Activated naive CD4-positive, alpha-beta T cell treated with anti-CD3 and anti-CD28 coated beads for 36 hours (primary cell): ENCODE measurements at regions of chr3 and their contacts with region 1.

Region 1: GRCh38 chr3:71652781-71653413 is 69.4 kb upstream of the FOXP1 start:
- DNase-seq: peak; percentile 42
- H3K4me3 Mint-ChIP-seq: no peak overlapping the region
- H3K27ac Mint-ChIP-seq: no peak overlapping the region
- H3K4me1 Mint-ChIP-seq: peaks cover 4% of the 10 kb centered on the region
- H3K27me3 Mint-ChIP-seq: no peaks in the 10 kb centered on the region

Region 2: DNA sequence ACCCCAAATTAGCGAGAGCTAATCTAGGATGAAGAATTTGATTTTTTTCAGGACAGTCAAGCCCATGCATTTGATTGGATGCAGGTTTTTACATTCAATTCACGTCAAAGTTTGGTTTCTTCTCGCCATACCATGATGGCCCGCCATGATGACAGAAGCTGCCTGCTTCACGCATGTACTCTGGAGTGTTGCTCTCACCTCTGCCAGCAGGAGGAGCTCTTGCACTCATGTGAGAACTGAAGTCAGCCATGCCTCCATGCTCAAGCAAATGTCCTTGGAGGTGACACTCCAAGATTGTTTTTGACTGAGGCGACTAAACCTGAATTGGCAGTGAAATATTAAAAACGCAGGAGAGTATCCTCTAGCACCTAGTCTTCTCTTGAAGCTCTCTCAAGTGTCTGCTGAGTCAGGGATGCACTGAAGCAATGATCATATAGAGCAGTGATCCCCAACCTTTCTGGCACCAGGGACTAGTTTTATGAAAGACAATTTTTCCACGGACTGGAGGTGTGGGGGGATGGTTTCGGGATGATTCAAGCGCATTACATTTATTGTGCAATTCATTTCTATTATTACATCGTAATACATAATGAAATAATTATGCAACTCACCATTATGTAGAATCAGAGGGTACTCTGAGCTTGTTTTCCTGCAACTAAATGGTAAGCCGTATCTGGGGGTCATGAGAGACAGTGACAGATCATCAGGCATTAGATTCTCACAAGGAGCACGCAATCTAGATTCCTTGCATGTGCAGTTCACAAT is 1532.4 kb before region 1 on chr3:
- CTCF ChIA-PET with region 1: no interaction called
- intact Hi-C with region 1: loop called (anchors 10 kb)
- DNase-seq: peak; percentile 84
- H3K4me3 Mint-ChIP-seq: no peak overlapping the region
- H3K27ac Mint-ChIP-seq: no peak overlapping the region
- H3K4me1 Mint-ChIP-seq: peaks cover 2% of the 10 kb centered on the region
- H3K27me3 Mint-ChIP-seq: peaks cover 8% of the 10 kb centered on the region

Region 3: DNA sequence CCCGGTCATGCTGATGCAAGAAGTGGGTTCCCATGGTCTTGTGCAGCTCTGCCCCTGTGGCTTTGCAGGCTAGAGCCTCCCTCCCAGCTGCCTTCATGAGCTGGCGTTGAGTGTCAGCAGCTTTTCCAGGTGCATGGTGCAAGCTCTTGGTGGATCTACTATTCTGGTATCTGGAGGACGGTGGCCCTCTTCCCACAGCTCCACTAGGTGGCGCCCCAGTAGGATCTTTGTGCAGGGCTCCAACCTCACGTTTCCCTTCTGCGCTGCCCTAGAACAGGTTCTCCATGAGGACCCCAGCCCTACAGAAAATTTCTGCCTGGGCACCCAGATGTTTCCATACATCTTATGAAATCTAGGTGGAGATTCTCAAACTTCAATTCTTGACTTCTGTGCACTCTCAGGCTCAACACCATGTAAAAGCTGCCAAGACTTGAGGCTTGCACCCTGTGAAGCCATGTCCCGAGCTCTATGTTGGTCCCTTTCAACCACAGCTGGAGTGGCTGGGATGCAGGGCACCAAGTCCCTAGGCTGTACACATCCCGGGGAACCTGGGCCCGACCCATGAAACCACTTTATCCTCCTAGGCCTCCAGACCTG is 1102.1 kb before region 1 on chr3:
- CTCF ChIA-PET with region 1: no interaction called
- intact Hi-C with region 1: loop called (anchors 2 kb)
- DNase-seq: peak; percentile 88
- H3K4me3 Mint-ChIP-seq: no peak overlapping the region
- H3K27ac Mint-ChIP-seq: no peak overlapping the region
- H3K4me1 Mint-ChIP-seq: no peaks in the 10 kb centered on the region
- H3K27me3 Mint-ChIP-seq: no peaks in the 10 kb centered on the region

Region 4: GRCh38 chr3:71069797-71070196 is 583.1 kb before region 1 on chr3:
- CTCF ChIA-PET with region 1: no interaction called
- intact Hi-C with region 1: loop called (anchors 5 kb)
- DNase-seq: peak; percentile 92
- H3K4me3 Mint-ChIP-seq: no peak overlapping the region
- H3K27ac Mint-ChIP-seq: peak overlapping the region; percentile 57
- H3K4me1 Mint-ChIP-seq: peaks cover 78% of the 10 kb centered on the region
- H3K27me3 Mint-ChIP-seq: no peaks in the 10 kb centered on the region

Region 5: DNA sequence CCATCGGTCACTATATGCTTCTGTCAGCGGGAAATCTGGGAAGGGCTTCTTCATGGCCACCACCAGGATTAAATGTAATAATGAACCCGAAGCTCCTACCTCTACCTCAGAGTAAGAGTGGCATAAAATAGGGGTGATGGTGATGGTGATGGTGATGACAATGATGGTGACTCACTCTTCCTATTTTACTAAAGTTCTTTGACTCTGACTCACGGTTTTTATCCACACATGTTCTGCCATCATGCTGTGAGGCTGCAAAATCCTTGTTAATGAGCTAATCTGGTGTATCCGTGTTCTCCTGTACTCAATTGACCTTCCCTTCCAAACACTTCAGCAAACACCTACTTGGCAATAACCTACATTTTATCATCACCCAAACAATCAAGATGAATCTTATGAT is 51.1 kb before region 1 on chr3:
- CTCF ChIA-PET with region 1: no interaction called
- intact Hi-C with region 1: loop called (anchors 5 kb)
- DNase-seq: no peak
- H3K4me3 Mint-ChIP-seq: no peak overlapping the region
- H3K27ac Mint-ChIP-seq: no peak overlapping the region
- H3K4me1 Mint-ChIP-seq: peaks cover 30% of the 10 kb centered on the region
- H3K27me3 Mint-ChIP-seq: no peaks in the 10 kb centered on the region

Region 6: GRCh38 chr3:72426618-72427397 is 773.9 kb after region 1 on chr3:
- CTCF ChIA-PET with region 1: no interaction called
- intact Hi-C with region 1: no loop called
- DNase-seq: no peak
- H3K4me3 Mint-ChIP-seq: no peak overlapping the region
- H3K27ac Mint-ChIP-seq: no peak overlapping the region
- H3K4me1 Mint-ChIP-seq: peaks cover 70% of the 10 kb centered on the region
- H3K27me3 Mint-ChIP-seq: no peaks in the 10 kb centered on the region